T-cell (primary cell): ENCODE measurements at regions of chrX and their contacts with region 1.

Region 1: GRCh38 chrX:106898462-106898861 is 4.7 kb downstream of the RIPPLY1 start:
- DNase-seq: peak in 4 of 35 experiments; percentile 2 to 60 (median 6)
- ATAC-seq: peak in 3 of 4 experiments; percentile 45 to 54 (median 47)
- H3K4me3 ChIP-seq: no peak overlapping the region
- H3K4me3 Mint-ChIP-seq: no peak overlapping the region
- H3K27ac ChIP-seq: no peak overlapping the region
- H3K27ac Mint-ChIP-seq: no peak overlapping the region
- H3K4me1 ChIP-seq: no peaks in the 10 kb centered on the region
- H3K4me1 Mint-ChIP-seq: no peaks in the 10 kb centered on the region
- H3K27me3 ChIP-seq: no peaks in the 10 kb centered on the region
- H3K27me3 Mint-ChIP-seq: peaks cover 0 to 17% of the 10 kb centered on the region in 2 donors

Region 2: GRCh38 chrX:106437405-106437804 is 461.1 kb before region 1 on chrX:
- CTCF ChIA-PET with region 1: no interaction called
- POLR2A ChIA-PET with region 1: no interaction called
- DNase-seq: no peak
- ATAC-seq: no peak
- H3K4me3 ChIP-seq: no peak overlapping the region
- H3K4me3 Mint-ChIP-seq: no peak overlapping the region
- H3K27ac ChIP-seq: no peak overlapping the region
- H3K27ac Mint-ChIP-seq: no peak overlapping the region
- H3K4me1 ChIP-seq: no peaks in the 10 kb centered on the region
- H3K4me1 Mint-ChIP-seq: no peaks in the 10 kb centered on the region
- H3K27me3 ChIP-seq: no peaks in the 10 kb centered on the region
- H3K27me3 Mint-ChIP-seq: peaks cover 4 to 37% of the 10 kb centered on the region in 2 donors

Region 3: DNA sequence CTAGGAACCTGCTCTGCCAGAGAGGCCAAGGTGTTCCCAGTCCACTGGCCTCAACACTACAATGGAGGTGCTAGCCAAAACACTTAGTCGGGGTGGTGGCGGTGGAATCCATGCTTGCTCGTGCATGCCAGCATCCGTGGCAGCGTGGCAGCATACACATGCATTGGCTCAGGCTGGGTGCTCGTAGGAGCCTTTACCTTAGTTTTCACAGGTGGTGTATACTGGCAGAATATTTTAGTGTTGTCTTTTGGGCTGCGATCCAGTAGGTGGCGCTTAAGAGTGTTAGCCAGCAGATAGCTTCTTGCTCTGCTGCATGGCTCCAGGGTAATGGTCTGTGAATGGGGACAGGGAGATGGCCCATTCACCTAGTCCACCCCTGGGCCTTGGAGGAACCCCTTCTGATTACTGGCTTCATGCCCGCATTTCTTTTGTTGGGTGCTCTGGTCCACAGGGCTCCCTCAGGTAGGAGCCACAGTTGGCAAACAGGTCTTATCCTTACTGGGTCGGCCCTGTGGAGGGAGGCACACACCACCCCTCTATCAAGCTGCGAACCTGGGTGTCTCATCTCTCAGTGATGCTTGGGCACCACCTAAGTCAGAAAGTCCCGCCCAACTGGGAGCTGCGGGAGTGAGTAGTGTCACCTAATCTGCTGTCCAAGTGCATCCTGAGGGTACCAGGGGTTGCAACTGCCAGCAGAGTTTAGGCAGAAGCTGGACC is 35.3 kb before region 1 on chrX:
- CTCF ChIA-PET with region 1: interaction called, 3 to 12 read pairs
- POLR2A ChIA-PET with region 1: no interaction called
- DNase-seq: peak in 13 of 35 experiments; percentile 0 to 23 (median 7)
- ATAC-seq: no peak
- H3K4me3 ChIP-seq: no peak overlapping the region
- H3K4me3 Mint-ChIP-seq: no peak overlapping the region
- H3K27ac ChIP-seq: no peak overlapping the region
- H3K27ac Mint-ChIP-seq: no peak overlapping the region
- H3K4me1 ChIP-seq: no peaks in the 10 kb centered on the region
- H3K4me1 Mint-ChIP-seq: no peaks in the 10 kb centered on the region
- H3K27me3 ChIP-seq: peaks cover 0 to 9% of the 10 kb centered on the region in 2 experiments
- H3K27me3 Mint-ChIP-seq: peaks cover 3 to 46% of the 10 kb centered on the region in 2 donors

Region 4: DNA sequence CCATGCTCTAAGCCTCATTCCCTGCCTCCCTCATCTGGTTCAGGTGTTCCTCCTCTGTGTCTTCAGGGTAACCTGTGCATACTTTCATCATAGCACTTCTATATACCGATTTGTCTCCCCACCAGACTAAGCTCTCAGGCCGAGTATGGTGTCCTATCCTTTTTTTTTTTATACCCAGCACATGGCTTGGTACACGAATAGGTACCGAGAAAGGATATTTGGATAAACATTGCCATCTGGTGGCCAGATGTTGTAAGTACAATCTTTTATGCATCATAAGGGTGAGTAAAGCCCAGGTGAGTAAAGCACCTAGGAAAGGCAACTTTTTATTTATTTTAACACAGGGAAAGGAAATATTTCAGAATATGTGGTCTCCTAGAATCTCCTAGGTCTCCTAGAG is 995.6 kb after region 1 on chrX:
- CTCF ChIA-PET with region 1: interaction called, 4 to 10 read pairs
- POLR2A ChIA-PET with region 1: no interaction called
- DNase-seq: peak in 15 of 35 experiments; percentile 1 to 71 (median 10)
- ATAC-seq: peak in 3 of 4 experiments; percentile 53 to 74 (median 72)
- H3K4me3 ChIP-seq: no peak overlapping the region
- H3K4me3 Mint-ChIP-seq: no peak overlapping the region
- H3K27ac ChIP-seq: no peak overlapping the region
- H3K27ac Mint-ChIP-seq: peak overlapping the region in 1 of 2 donors; percentile 66
- H3K4me1 ChIP-seq: no peaks in the 10 kb centered on the region
- H3K4me1 Mint-ChIP-seq: peaks cover 0 to 7% (median 5%) of the 10 kb centered on the region in 3 donors
- H3K27me3 ChIP-seq: no peaks in the 10 kb centered on the region
- H3K27me3 Mint-ChIP-seq: peaks cover 0 to 16% of the 10 kb centered on the region in 2 donors